ENCODE measurements at regions of chr14 and their contacts with region 1.

Region 1: GRCh38 chr14:25431211-25432048 is 381.5 kb upstream of the STXBP6 start:
- DNase-seq: peak; percentile 87
- H3K4me3 ChIP-seq: no peak overlapping the region
- H3K27ac ChIP-seq: no peak overlapping the region
- H3K4me1 ChIP-seq: no peaks in the 10 kb centered on the region
- H3K27me3 ChIP-seq: no peaks in the 10 kb centered on the region
- CTCF ChIP-seq: peak in 2 of 3 experiments; percentile 23 to 27
- POLR2A ChIP-seq: no peak

Region 2: GRCh38 chr14:24741871-24742270 is 689.6 kb before region 1 on chr14:
- intact Hi-C with region 1: loop called (anchors 10 kb)
- DNase-seq: no peak
- H3K4me3 ChIP-seq: no peak overlapping the region
- H3K27ac ChIP-seq: no peak overlapping the region
- H3K4me1 ChIP-seq: no peaks in the 10 kb centered on the region
- H3K27me3 ChIP-seq: no peaks in the 10 kb centered on the region
- CTCF ChIP-seq: no peak
- POLR2A ChIP-seq: no peak

Region 3: DNA sequence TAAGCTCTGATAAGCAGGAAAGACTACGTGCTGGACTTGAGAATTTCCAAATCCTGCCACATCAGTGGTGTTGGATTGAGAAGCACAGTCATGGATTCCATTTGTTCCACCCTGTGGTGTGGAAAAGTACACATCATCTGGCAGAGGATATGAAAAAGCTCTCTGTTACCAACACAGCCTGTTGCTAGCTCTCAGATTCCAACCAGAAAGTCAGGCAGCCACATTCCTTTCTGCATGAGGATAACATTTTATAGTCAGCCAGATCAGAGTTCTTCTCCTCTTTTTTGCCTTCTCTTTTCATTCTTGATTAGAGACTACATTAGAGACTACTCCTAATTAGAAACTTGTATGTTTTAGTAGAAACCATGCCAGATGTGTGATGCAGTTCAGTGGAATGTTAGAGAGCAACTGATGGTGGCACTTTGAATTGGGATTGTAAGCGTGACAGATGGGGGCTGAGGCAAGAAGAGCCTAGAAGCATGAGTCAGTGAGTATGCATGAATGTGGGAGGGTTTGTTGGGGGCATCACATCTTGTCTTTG is 320.3 kb before region 1 on chr14:
- intact Hi-C with region 1: no loop called
- DNase-seq: no peak
- H3K4me3 ChIP-seq: no peak overlapping the region
- H3K27ac ChIP-seq: no peak overlapping the region
- H3K4me1 ChIP-seq: peaks cover 2% of the 10 kb centered on the region
- H3K27me3 ChIP-seq: no peaks in the 10 kb centered on the region
- CTCF ChIP-seq: no peak
- POLR2A ChIP-seq: no peak